Lower leg skin (tissue), 4 donors: ENCODE measurements at regions of chr12 and their contacts with region 1.

Region 1: GRCh38 chr12:130671556-130671955 is 44.5 kb downstream of the RIMBP2 start:
- DNase-seq: no peak
- H3K4me3 ChIP-seq: no peak overlapping the region
- CTCF ChIP-seq: no peak
- POLR2A ChIP-seq: no peak

Region 2: DNA sequence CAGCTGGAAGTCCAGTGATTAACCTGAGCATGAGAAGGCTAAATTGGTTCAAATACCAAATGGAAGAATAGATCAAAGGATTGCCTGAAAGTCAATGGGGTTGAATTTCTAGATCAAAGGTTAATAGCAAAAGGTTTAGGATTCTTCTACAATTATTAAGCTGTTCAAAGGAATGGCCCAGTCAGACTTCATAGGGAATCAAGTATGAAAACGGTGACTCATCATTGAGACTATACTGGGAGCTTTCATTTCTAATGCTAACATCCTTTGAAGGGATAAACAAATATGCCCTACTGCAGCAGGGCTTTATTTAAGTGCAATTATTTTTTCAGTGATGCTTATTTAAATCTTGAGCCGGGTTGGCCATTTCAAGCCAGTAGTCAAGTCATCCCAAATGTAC is 108.2 kb before region 1 on chr12:
- intact Hi-C with region 1: no loop called
- DNase-seq: no peak
- H3K4me3 ChIP-seq: no peak overlapping the region
- CTCF ChIP-seq: no peak
- POLR2A ChIP-seq: no peak

Region 3: DNA sequence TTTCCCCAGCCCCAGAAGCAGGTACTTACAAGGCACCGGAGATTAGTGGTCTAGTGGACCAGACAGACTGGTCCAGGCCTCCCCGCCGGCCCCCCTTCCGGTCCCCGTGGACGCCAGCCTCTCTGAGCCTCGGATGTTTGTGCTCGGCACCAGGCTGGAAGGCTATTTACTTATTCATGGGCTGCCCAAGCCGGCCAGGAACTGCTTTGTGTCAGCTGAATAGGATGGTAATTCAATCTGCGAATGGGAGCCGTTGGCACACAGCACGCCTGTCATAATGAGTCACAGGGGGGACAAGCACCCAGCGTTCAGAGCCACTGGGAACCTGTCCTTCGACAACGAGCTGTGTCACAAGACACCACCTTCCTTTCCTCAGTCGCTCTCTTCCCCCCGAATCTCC is 37.8 kb before region 1 on chr12:
- intact Hi-C with region 1: loop called (anchors 1 kb)
- DNase-seq: no peak
- H3K4me3 ChIP-seq: no peak overlapping the region
- CTCF ChIP-seq: no peak
- POLR2A ChIP-seq: no peak